ENCODE measurements at regions of chr9 and their contacts with region 1.

Region 1: DNA sequence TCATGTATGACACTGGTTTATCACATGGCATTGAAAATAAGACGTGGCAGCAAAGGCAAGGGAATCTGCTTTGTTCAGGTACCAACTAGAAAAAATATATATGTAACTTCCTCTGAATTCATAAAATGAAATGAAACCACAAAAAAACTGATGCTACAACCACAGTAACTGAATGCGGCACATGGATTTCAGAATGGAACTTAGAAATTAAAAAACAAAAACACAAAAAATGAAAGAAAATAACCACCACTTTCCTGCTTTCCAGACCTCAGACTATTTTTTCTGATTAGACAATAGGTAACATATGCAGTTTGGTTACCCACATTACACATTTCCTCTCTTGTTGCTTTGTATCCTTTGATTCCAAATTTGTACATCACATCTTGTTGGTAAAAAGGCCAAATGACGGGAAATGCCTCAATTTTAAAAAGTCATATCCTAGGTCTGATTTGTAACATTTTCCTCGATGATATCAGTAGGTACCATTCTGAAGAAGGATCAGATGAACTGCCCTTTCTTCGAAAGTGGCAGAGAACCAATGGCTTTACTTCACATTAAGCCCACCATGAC is 18.1 kb upstream of the PDCL start:
- DNase-seq: no peak
- ATAC-seq: peak; percentile 48
- H3K4me3 Mint-ChIP-seq: no peak overlapping the region
- H3K27ac Mint-ChIP-seq: peak overlapping the region; percentile 92
- H3K4me1 Mint-ChIP-seq: peaks cover 34% of the 10 kb centered on the region
- H3K27me3 Mint-ChIP-seq: no peaks in the 10 kb centered on the region

Region 2: GRCh38 chr9:122800066-122801060 is 46.1 kb before region 1 on chr9 and contains the start of gene OR1K1:
- CTCF ChIA-PET with region 1: no interaction called
- POLR2A ChIA-PET with region 1: no interaction called
- intact Hi-C with region 1: no loop called
- DNase-seq: no peak
- ATAC-seq: no peak
- H3K4me3 Mint-ChIP-seq: no peak within 1 kb of the TSS
- H3K27ac Mint-ChIP-seq: no peak within 1 kb of the TSS
- H3K4me1 Mint-ChIP-seq: no peaks in the 10 kb centered on the region
- H3K27me3 Mint-ChIP-seq: no peaks in the 10 kb centered on the region
- total RNA-seq, gene OR1K1: not detected

Region 3: GRCh38 chr9:122897969-122898368 is 51.5 kb after region 1 on chr9:
- CTCF ChIA-PET with region 1: no interaction called
- POLR2A ChIA-PET with region 1: no interaction called
- intact Hi-C with region 1: loop called (anchors 5 kb)
- DNase-seq: no peak
- ATAC-seq: no peak
- H3K4me3 Mint-ChIP-seq: no peak overlapping the region
- H3K27ac Mint-ChIP-seq: peak overlapping the region; percentile 23
- H3K4me1 Mint-ChIP-seq: peaks cover 33% of the 10 kb centered on the region
- H3K27me3 Mint-ChIP-seq: no peaks in the 10 kb centered on the region